ENCODE measurements at regions of chr12 and their contacts with region 1.

Region 1: GRCh38 chr12:3752741-3753486 is at the start of gene CRACR2A:
- DNase-seq: peak; percentile 75
- H3K4me3 ChIP-seq: peak within 1 kb of the TSS; percentile 39 to 68 (median 53)
- H3K27ac ChIP-seq: peak within 1 kb of the TSS; percentile 50
- H3K4me1 ChIP-seq: peaks cover 16% of the 10 kb centered on the region
- H3K27me3 ChIP-seq: no peaks in the 10 kb centered on the region
- CTCF ChIP-seq: peak; percentile 68 to 72
- POLR2A ChIP-seq: no peak
- total RNA-seq, gene CRACR2A: 14.9 and 15.9 TPM in 2 replicates

Region 2: GRCh38 chr12:3658327-3659163 is 94.4 kb before region 1 on chr12:
- CTCF ChIA-PET with region 1: interaction called, 7 read pairs
- POLR2A ChIA-PET with region 1: no interaction called
- dilution Hi-C with region 1: no loop called
- intact Hi-C with region 1: loop called (anchors 1 kb)
- DNase-seq: peak; percentile 20
- H3K4me3 ChIP-seq: no peak overlapping the region
- H3K27ac ChIP-seq: no peak overlapping the region
- H3K4me1 ChIP-seq: no peaks in the 10 kb centered on the region
- H3K27me3 ChIP-seq: no peaks in the 10 kb centered on the region
- CTCF ChIP-seq: peak; percentile 44 to 68
- POLR2A ChIP-seq: no peak

Region 3: DNA sequence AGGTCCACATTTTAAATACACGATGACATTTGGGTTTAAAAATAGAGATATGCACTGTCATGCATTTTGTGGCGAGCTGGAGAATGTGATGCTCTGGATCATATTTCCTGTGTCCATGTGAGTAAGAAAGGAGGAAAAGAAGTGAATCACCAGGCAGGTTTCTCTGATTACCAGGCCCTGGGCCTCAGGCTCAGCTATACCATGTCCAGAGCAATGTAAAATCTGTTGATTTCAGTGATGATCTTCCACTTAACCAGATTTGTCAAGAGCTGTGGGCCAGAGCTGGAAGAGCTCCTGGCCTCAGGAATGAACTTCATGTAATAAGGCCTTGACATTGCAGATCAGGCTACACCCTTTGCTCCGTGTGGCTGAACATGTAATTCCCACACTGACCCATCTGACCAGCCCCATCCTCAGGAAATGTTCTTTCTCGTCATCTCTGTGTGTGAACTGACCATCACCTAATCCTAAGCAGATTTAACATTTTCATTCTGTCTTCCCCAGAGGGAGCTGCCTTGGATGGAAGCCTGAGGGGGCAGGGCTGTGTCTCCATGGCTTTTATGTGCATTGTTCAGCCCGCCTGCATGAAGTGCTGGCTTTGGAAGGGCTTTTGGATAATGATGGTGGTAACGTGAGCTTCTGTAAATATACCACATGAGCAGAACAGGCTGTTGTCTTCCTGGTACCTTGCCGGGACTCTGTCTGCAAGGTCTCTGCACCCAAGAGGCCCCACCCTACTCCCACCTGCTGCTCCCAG is 54.5 kb before region 1 on chr12:
- CTCF ChIA-PET with region 1: interaction called, 8 read pairs
- POLR2A ChIA-PET with region 1: no interaction called
- dilution Hi-C with region 1: no loop called
- intact Hi-C with region 1: loop called (anchors 2 kb)
- DNase-seq: peak; percentile 68
- H3K4me3 ChIP-seq: no peak overlapping the region
- H3K27ac ChIP-seq: peak overlapping the region; percentile 92
- H3K4me1 ChIP-seq: peaks cover 18% of the 10 kb centered on the region
- H3K27me3 ChIP-seq: no peaks in the 10 kb centered on the region
- CTCF ChIP-seq: no peak
- POLR2A ChIP-seq: no peak

Region 4: DNA sequence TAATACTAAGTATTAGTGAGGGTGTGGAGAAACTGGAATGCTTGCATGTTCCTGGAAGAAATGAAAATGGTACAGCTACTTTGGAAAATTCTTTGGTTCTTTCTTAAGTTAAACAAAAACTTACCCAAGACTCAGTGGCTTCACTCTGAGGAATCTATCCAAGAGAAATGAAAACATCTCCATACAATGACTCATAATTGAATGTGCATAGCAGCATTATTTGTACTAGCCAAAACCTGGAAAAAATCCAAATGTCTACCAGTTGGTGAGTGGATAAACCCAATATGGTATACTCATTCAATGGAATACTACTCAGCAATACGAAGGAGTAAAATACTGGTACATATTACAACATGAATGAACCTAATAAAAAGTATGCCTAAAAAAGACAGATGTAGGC is 18.0 kb after region 1 on chr12:
- CTCF ChIA-PET with region 1: interaction called, 7 read pairs
- POLR2A ChIA-PET with region 1: no interaction called
- dilution Hi-C with region 1: no loop called
- intact Hi-C with region 1: loop called (anchors 1 kb)
- DNase-seq: peak; percentile 41
- H3K4me3 ChIP-seq: no peak overlapping the region
- H3K27ac ChIP-seq: no peak overlapping the region
- H3K4me1 ChIP-seq: peaks cover 8% of the 10 kb centered on the region
- H3K27me3 ChIP-seq: peaks cover 8% of the 10 kb centered on the region in 2 experiments
- CTCF ChIP-seq: no peak
- POLR2A ChIP-seq: no peak

Region 5: DNA sequence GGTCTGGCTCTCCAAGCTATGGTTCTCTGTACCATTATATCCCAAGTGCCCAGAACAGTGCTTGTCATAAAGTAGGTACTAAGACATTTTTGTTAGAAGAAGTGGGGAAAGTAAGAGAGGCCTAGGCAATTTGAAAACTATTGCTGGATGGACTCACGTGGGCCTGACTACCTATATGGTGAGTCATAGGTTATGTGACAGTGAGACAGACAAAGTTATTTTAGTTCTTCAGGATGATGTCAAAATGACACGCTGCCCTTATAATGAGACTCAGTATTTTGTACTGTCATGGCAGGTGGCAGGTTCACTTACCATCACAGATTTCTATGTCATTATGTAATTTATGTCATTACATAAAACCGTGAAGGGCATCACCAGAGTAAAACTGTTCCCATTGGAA is 67.2 kb after region 1 on chr12:
- CTCF ChIA-PET with region 1: no interaction called
- POLR2A ChIA-PET with region 1: no interaction called
- dilution Hi-C with region 1: no loop called
- intact Hi-C with region 1: no loop called
- DNase-seq: no peak
- H3K4me3 ChIP-seq: no peak overlapping the region
- H3K27ac ChIP-seq: no peak overlapping the region
- H3K4me1 ChIP-seq: no peaks in the 10 kb centered on the region
- H3K27me3 ChIP-seq: no peaks in the 10 kb centered on the region
- CTCF ChIP-seq: no peak
- POLR2A ChIP-seq: no peak

Measured in endothelial cell of umbilical vein (primary cell).